ENCODE measurements at regions of chr18 and their contacts with region 1.

Region 1: GRCh38 chr18:74597662-74598349 is at the start of gene ZNF407:
- DNase-seq: peak; percentile 90
- ATAC-seq: peak; percentile 79
- H3K4me3 Mint-ChIP-seq: peak within 1 kb of the TSS; percentile 86
- H3K27ac Mint-ChIP-seq: peak within 1 kb of the TSS; percentile 99
- H3K4me1 Mint-ChIP-seq: peaks cover 40% of the 10 kb centered on the region
- H3K27me3 Mint-ChIP-seq: no peaks in the 10 kb centered on the region
- total RNA-seq, gene ZNF407: 11.4 TPM

Region 2: DNA sequence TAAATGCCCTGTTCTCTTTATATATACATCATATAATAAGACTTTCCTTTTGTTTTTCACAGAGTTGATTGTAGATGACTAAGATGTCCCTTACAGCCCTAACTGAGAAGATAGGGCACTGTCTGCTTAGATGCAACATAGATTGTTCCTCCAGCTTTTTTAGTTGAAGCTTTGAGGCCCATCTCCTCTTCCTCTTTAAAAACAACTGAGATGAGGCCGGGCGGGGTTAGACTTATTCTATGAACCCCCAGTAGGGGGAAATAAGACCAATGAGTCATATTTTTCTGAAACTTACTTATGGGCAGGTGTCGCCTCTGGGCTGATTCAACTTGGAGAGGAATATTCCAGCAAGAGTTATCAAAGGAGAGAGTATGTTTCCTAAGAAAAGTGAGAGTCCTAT is 534.8 kb before region 1 on chr18:
- CTCF ChIA-PET with region 1: no interaction called
- POLR2A ChIA-PET with region 1: no interaction called
- intact Hi-C with region 1: loop called in 1 of 2 experiments (anchors 5 kb)
- DNase-seq: peak; percentile 65
- ATAC-seq: peak; percentile 55
- H3K4me3 Mint-ChIP-seq: no peak overlapping the region
- H3K27ac Mint-ChIP-seq: peak overlapping the region; percentile 75
- H3K4me1 Mint-ChIP-seq: peaks cover 34% of the 10 kb centered on the region
- H3K27me3 Mint-ChIP-seq: no peaks in the 10 kb centered on the region

Region 3: DNA sequence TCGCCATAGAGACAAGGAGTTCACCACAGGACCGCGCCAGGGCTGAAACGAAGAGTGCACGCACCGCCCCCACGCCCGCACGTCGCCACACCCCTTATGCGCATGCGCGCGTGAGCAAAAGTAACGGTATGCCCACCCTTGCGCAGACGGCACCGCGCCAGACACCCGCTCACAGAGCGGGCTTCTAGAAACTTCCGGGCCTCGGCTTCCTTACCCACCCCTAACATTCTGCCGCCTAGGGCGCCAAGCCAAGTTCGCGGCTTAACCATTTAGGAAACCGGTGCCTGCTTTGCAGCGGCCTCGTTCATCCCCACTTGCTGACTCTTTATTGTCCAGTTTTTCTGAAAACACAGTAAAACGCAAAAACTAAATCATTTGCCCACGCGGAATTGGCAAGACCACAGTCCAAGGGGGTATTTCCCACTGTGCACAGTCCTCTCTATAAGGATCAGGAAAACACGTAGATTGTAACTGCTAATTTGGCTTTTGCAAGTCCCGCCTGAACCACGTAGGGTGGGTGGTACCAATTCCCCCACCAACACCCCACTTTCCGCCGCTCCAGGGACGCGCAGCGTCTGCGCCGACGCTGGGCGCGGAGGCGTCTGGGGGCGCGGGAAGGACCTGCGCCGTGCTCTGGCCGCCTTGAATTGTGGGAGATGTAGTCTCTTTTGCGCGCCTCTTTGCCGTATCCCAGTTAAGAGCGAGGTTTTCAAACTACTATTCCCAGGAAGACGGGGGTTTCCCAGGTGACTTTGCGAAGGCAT is 449.8 kb before region 1 on chr18 and contains the starts of genes FBXO15 and TIMM21:
- CTCF ChIA-PET with region 1: no interaction called
- POLR2A ChIA-PET with region 1: no interaction called
- intact Hi-C with region 1: loop called in 1 of 2 experiments (anchors 1 kb)
- DNase-seq: peak; percentile 98
- ATAC-seq: peak; percentile 91
- H3K4me3 Mint-ChIP-seq: peak within 1 kb of the TSS; percentile 97
- H3K27ac Mint-ChIP-seq: peak within 1 kb of the TSS; percentile 98
- H3K4me1 Mint-ChIP-seq: peaks cover 36% of the 10 kb centered on the region
- H3K27me3 Mint-ChIP-seq: no peaks in the 10 kb centered on the region
- total RNA-seq, gene FBXO15: 1.4 to 1.6 TPM
- total RNA-seq, gene TIMM21: 36.9 to 52.8 TPM

Region 4: DNA sequence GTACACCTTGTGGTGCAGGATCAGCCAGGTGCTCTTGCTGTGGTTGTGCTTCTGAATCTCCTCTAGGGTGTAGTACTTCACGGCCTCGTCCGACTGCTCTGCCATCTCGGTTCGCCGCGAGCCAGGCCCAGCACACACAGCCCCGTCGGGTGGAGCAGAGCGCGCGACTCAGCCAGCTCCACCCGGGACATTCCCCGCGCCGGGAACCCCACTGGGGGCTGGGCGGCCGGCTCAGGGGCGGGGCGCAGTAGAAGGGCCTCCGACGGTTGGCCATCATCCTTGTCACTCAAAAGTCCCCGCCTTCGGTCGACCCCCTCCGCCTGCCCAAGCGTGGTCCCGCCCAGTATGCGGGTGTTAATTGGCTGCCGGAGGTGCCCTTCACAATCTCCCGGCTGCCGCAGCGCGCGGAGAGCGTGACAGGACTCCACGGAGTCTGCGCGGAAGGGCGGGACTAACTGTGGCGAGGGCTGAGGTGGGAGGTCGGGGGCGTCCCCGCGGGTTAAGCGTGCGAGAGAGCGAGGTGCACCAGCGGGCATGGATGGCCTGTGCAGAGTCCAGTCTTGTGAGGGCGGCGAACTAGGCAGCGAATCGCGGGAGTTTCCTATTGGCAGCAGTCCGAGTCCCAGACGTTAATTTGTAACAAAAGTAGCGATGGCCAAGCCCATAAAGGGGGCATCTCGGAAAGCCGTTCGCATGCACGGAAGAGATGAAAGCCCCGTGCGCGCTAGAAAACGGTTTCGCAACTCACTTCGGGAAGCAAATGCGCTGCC is 305.9 kb before region 1 on chr18 and contains the start of gene CYB5A:
- CTCF ChIA-PET with region 1: no interaction called
- POLR2A ChIA-PET with region 1: no interaction called
- intact Hi-C with region 1: loop called (anchors 1 kb)
- DNase-seq: peak; percentile 98
- ATAC-seq: peak; percentile 99
- H3K4me3 Mint-ChIP-seq: peak within 1 kb of the TSS; percentile 86
- H3K27ac Mint-ChIP-seq: peak within 1 kb of the TSS; percentile 83
- H3K4me1 Mint-ChIP-seq: peaks cover 6% of the 10 kb centered on the region
- H3K27me3 Mint-ChIP-seq: no peaks in the 10 kb centered on the region
- total RNA-seq, gene CYB5A: 53.1 to 61.4 TPM

Region 5: GRCh38 chr18:74506425-74507119 is 91.2 kb before region 1 on chr18:
- CTCF ChIA-PET with region 1: no interaction called
- POLR2A ChIA-PET with region 1: no interaction called
- intact Hi-C with region 1: no loop called
- DNase-seq: no peak
- ATAC-seq: no peak
- H3K4me3 Mint-ChIP-seq: no peak overlapping the region
- H3K27ac Mint-ChIP-seq: peak overlapping the region; percentile 42
- H3K4me1 Mint-ChIP-seq: peaks cover 5% of the 10 kb centered on the region
- H3K27me3 Mint-ChIP-seq: no peaks in the 10 kb centered on the region

Region 6: DNA sequence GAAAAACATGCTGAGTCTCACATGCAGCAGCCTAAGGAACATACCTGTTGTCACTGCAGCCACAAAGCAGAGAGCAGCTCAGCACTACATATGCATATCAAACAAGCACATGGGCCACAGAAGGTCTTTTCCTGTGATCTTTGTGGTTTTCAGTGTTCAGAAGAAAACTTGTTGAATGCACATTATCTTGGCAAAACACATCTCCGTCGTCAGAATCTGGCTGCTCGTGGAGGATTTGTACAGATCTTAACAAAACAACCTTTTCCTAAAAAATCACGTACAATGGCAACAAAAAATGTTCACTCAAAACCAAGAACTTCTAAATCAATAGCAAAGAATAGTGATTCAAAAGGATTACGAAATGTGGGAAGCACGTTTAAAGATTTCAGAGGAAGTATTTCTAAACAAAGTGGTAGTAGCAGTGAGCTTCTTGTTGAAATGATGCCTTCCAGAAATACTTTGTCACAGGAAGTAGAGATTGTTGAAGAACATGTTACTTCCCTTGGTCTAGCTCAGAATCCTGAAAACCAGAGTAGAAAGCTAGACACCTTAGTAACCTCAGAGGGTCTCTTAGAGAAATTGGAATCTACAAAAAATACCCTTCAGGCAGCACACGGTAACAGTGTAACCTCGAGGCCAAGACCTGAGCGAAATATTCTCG is 33.9 kb after region 1 on chr18:
- CTCF ChIA-PET with region 1: interaction called, 4 read pairs
- POLR2A ChIA-PET with region 1: no interaction called
- intact Hi-C with region 1: loop called in 1 of 2 experiments (anchors 1 kb)
- DNase-seq: peak; percentile 28
- ATAC-seq: peak; percentile 71
- H3K4me3 Mint-ChIP-seq: peak overlapping the region; percentile 49
- H3K27ac Mint-ChIP-seq: peak overlapping the region; percentile 89
- H3K4me1 Mint-ChIP-seq: peaks cover 58% of the 10 kb centered on the region
- H3K27me3 Mint-ChIP-seq: no peaks in the 10 kb centered on the region

Region 7: DNA sequence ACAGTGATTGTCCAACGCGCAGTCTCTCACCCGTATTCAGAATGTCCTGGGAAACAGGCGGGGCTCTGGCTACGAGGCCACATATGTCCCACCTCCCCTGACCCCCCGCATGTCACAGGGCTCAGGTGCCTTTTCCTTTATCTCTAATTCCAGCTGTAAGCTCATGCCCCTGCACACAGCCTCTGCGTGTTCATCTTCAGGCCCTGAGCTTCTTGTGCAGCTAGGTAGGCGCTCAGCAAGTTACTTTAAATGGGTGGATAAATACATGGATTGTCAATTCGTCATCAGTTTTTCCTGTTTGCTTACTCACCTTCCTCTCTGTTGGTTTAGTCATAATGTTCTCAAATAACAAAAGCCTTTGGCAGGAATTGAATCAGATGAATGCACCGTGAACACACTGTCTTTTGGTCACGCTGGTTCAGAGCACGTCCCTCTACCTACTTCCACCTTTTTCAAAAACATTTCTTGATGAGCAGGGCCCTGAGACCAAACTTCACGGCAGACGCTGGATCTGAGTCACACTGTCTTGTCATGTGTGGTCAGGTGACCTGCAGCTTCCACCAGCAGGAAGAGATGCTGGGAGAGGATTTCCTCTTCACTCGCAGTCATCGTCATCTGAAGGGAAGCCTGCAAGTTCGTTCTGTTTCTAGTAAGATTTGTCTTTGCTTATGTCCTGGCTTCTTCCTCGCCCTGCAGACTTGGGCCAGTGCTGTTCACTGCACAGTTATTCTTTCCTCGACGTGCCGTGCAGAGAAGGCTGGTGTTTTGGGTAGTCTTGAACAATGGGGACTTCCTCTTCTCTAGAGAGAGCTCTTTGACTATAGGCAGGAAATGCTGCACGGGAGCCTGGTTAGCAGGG is 473.0 kb after region 1 on chr18:
- CTCF ChIA-PET with region 1: no interaction called
- POLR2A ChIA-PET with region 1: no interaction called
- intact Hi-C with region 1: loop called in 1 of 2 experiments (anchors 1 kb)
- DNase-seq: peak; percentile 82
- ATAC-seq: peak; percentile 94
- H3K4me3 Mint-ChIP-seq: peak overlapping the region; percentile 63
- H3K27ac Mint-ChIP-seq: peak overlapping the region; percentile 97
- H3K4me1 Mint-ChIP-seq: peaks cover 32% of the 10 kb centered on the region
- H3K27me3 Mint-ChIP-seq: no peaks in the 10 kb centered on the region

Region 8: GRCh38 chr18:76492669-76493212 is 1894.9 kb after region 1 on chr18:
- CTCF ChIA-PET with region 1: no interaction called
- POLR2A ChIA-PET with region 1: no interaction called
- intact Hi-C with region 1: loop called in 1 of 2 experiments (anchors 2 kb)
- DNase-seq: peak; percentile 100
- ATAC-seq: peak; percentile 85
- H3K4me3 Mint-ChIP-seq: peak overlapping the region; percentile 87
- H3K27ac Mint-ChIP-seq: peak overlapping the region; percentile 89
- H3K4me1 Mint-ChIP-seq: peaks cover 36% of the 10 kb centered on the region
- H3K27me3 Mint-ChIP-seq: peaks cover 33% of the 10 kb centered on the region